HepG2 (cell line): ENCODE measurements at regions of chr6 and their contacts with region 1.

Region 1: DNA sequence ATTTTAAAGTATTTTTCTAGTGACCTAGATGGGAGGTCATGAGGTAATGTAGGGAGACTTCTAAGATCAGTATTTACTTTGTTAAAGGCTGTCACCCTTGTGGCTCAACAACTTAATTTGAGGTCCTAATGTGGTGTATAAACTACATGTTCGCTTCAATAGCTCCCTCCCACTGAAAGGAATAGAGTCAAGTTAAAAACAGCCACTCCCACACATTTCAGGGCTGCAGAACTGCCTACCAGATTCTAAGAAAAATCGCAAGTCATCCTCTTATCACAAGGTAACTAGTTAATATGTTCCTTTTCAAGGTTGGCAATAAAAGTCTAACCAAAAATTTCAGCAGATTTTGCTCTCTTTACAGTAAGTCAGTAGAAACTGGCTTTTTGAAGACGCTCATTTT is 15.1 kb downstream of the GSTA1 start:
- DNase-seq: peak; percentile 35
- ATAC-seq: peak; percentile 70
- H3K4me3 ChIP-seq: no peak overlapping the region
- H3K27ac ChIP-seq: peak overlapping the region; percentile 81
- H3K4me1 ChIP-seq: peaks cover 63% of the 10 kb centered on the region
- H3K27me3 ChIP-seq: no peaks in the 10 kb centered on the region
- CTCF ChIP-seq: no peak
- EP300 ChIP-seq: peak in 1 of 2 experiments; percentile 10; a peak in 1 of 4 replicates
- POLR2A ChIP-seq: no peak
- RAD21 ChIP-seq: no peak

Region 2: DNA sequence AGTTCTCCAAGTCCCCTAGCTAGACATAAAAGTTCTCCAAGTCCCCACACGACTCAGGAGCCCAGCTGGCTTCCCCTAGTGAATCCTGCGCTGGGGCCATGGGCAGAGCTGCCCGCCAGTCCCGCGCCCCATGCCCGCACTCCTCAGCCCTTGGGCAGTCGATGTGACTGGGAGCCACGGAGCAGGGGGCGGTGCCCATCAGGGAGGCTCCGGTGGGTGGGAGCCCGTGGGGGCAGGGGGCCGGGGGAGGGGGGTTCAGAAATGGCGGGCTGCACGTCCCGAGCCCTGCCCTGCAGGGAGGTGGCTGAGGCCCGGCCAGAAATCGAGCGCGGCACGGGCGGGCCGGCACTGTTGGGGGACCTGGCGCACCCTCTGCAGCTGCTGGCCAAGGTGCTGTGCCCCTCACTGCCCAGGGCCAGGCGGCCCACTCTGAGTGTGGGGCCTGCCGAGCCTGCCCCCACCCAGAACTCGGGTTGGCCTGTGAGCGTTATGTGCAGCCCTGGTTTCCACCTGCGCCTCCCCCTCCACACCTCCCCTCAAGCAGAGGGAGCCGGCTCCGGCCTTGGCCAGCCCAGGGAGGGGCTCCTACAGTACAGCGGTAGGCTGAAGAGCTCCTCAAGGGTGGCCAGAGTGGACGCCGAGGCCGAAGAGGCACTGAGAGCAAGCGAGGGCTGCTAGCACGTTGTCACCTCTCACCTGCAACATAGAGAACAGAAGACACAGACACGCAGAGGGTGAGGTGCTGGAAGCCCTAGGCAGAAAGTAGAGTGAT is 40.8 kb after region 1 on chr6:
- CTCF ChIA-PET with region 1: no interaction called
- POLR2A ChIA-PET with region 1: no interaction called
- in situ Hi-C with region 1: loop called (anchors 5 kb)
- intact Hi-C with region 1: no loop called
- DNase-seq: no peak
- ATAC-seq: no peak
- H3K4me3 ChIP-seq: no peak overlapping the region
- H3K27ac ChIP-seq: no peak overlapping the region
- H3K4me1 ChIP-seq: peaks cover 37% of the 10 kb centered on the region
- H3K27me3 ChIP-seq: no peaks in the 10 kb centered on the region
- CTCF ChIP-seq: no peak
- EP300 ChIP-seq: no peak
- POLR2A ChIP-seq: no peak
- RAD21 ChIP-seq: no peak

Region 3: GRCh38 chr6:52839119-52840055 is 50.9 kb after region 1 on chr6:
- CTCF ChIA-PET with region 1: no interaction called
- POLR2A ChIA-PET with region 1: no interaction called
- in situ Hi-C with region 1: no loop called
- intact Hi-C with region 1: no loop called
- DNase-seq: peak; percentile 79
- ATAC-seq: peak; percentile 98
- H3K4me3 ChIP-seq: peak overlapping the region; percentile 30 to 71 (median 56); a peak in 5 of 6 replicates
- H3K27ac ChIP-seq: no peak overlapping the region
- H3K4me1 ChIP-seq: peaks cover 6% of the 10 kb centered on the region; the same call in 1 of the 2 replicates
- H3K27me3 ChIP-seq: 0 out of 5 replicates have a peak, but pooled peaks cover 0 to 1% of the 10 kb centered on the region in 2 experiments
- CTCF ChIP-seq: peak; percentile 94
- EP300 ChIP-seq: no peak
- POLR2A ChIP-seq: no peak
- RAD21 ChIP-seq: peak; percentile 73